ENCODE measurements at regions of chr18 and their contacts with region 1.

Region 1: DNA sequence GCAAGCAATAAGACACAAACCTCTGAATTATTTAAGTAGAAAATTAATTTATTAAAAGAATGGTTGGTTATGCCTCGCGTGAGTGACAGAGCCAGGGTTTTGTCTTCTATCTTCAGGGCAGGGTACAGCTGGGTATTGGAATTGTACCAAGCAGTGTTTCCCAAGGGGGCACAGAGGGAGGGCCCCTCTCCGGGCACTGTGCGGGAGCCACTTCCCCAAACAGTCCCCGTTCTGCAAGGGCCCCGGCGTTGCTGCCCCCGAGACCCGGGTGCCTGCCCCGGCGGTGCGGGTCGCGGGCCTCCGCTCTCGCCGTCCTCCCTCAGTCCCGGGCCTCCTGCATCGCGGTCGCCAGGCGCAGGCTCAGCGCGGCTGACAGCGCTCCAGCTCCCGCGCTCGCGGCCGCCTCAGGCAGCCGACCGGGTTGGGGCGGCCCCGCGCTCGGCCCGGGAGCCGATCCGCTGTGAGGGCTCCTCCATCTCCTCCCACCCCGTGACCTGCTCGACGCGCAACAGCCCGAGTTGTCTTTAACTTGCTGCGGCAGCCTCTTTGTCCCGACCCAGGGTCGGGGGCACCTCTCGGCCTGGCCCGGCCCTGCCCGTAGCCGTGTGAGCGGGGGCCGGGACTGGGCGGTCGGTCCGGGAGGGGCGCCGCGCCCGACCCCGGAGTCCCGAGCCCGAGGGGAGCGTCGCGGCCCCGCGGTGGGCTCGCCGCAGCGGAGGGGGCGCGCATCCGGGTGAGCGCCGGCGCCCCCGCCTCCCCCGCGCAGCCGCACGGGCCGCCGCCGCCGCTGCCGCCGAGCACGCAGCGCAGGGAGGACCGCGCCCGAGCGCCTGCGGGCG is 620 bp upstream of the GALNT1 start:
- DNase-seq: peak; percentile 55 to 84 (median 65)
- ATAC-seq: peak; percentile 60 to 87 (median 84)
- H3K4me3 ChIP-seq: peak overlapping the region; percentile 65 to 96 (median 79)
- H3K27ac ChIP-seq: peak overlapping the region; percentile 90 to 99 (median 96)
- H3K4me1 ChIP-seq: peaks cover 0 to 32% (median 21%) of the 10 kb centered on the region in 12 donors
- H3K27me3 ChIP-seq: no peaks in the 10 kb centered on the region
- CTCF ChIP-seq: no peak
- POLR2A ChIP-seq: peak in 1 of 2 donors; percentile 16

Region 2: GRCh38 chr18:35386600-35387351 is 194.1 kb before region 1 on chr18:
- intact Hi-C with region 1: loop called in 1 of 10 experiments (anchors 10 kb)
- DNase-seq: peak; percentile 57 to 69 (median 61)
- ATAC-seq: peak in 3 of 4 donors; percentile 66 to 81 (median 69)
- H3K4me3 ChIP-seq: no peak overlapping the region
- H3K27ac ChIP-seq: peak overlapping the region in 1 of 12 donors; percentile 16
- H3K4me1 ChIP-seq: peaks cover 0 to 5% (median 0%) of the 10 kb centered on the region in 12 donors
- H3K27me3 ChIP-seq: peaks cover 0 to 3% (median 0%) of the 10 kb centered on the region in 9 donors
- CTCF ChIP-seq: peak; percentile 86 to 99 (median 92)
- POLR2A ChIP-seq: no peak

Region 3: DNA sequence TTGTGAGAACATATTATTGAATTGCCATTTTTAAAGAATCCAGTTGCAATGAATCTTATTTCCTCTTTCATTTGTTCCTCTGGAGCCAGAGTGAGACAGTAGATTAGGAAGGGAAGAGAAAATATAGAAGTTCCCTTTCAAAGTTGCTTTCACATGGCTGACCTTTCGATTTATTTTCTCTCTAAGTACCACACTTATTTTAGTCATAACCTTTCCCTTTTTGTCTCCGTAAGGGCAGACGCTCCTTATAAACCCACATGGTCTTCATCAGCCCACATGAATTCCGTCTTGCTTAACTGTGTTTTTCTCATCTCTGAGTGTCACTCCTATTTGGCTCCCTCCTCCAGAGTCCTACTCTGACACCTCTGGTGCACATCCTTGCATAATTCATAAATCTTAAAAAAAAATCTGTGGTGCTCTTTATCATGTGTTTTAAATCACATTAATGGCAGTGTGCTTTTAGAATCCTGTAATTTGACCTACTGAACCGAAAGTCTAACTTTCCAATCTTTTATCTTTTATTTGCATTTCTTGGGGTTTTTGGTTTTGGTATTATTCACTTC is 165.3 kb before region 1 on chr18:
- intact Hi-C with region 1: loop called in 5 of 10 experiments (anchors 10 kb)
- DNase-seq: no peak
- ATAC-seq: peak in 1 of 4 donors; percentile 17
- H3K4me3 ChIP-seq: peak overlapping the region in 1 of 12 donors; percentile 33
- H3K27ac ChIP-seq: peak overlapping the region in 2 of 12 donors; percentile 10 to 60
- H3K4me1 ChIP-seq: peaks cover 0 to 24% (median 0%) of the 10 kb centered on the region in 12 donors
- H3K27me3 ChIP-seq: no peaks in the 10 kb centered on the region
- CTCF ChIP-seq: no peak
- POLR2A ChIP-seq: no peak

Region 4: GRCh38 chr18:35497370-35498197 is 83.3 kb before region 1 on chr18 and contains the start of gene INO80C:
- intact Hi-C with region 1: loop called in 6 of 10 experiments (anchors 2 to 10 kb)
- DNase-seq: peak; percentile 92 to 96 (median 93)
- ATAC-seq: peak; percentile 98 to 99 (median 98)
- H3K4me3 ChIP-seq: peak within 1 kb of the TSS; percentile 38 to 81 (median 67)
- H3K27ac ChIP-seq: peak within 1 kb of the TSS; percentile 93 to 99 (median 94)
- H3K4me1 ChIP-seq: peaks cover 0 to 30% (median 14%) of the 10 kb centered on the region in 12 donors
- H3K27me3 ChIP-seq: no peaks in the 10 kb centered on the region
- CTCF ChIP-seq: no peak
- POLR2A ChIP-seq: peak; percentile 29 to 85
- total RNA-seq, gene INO80C: 5.6 to 29.0 (median 22.3) TPM

Region 5: DNA sequence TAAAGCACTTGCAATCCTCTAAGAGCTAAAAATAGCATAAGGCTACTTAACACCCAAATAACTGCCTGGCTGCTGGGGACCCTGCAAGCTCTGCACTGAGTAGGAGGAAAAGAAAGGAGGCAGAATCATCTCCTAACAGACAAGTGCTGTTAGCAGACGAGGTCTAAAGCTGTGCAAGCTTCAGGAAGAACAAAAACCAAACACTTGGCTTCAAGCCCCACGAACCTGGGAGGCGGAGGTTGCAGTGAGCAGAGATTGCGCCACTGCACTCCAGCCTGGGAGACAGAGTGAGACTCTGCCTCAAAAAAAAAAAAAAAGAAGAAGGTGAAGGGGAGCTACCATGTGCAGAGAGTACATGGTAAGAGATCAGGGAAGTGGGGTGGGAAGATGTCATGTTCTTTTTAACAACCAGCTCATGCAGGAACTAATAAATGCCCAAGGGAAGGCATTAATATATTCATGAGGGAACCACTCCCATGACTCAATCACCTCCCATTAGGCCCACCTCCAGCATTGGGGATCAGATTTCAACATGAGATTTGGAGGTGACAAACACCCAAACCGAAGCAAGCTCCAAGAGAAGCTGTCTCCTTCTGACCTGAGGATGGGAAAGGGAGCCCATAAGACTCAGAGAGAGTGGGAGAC is 54.3 kb before region 1 on chr18:
- intact Hi-C with region 1: loop called in 1 of 10 experiments (anchors 5 kb)
- DNase-seq: no peak
- ATAC-seq: peak; percentile 19 to 49 (median 42)
- H3K4me3 ChIP-seq: peak overlapping the region in 7 of 12 donors; percentile 7 to 27 (median 14)
- H3K27ac ChIP-seq: peak overlapping the region in 7 of 12 donors; percentile 15 to 57 (median 32)
- H3K4me1 ChIP-seq: peaks cover 0 to 50% (median 19%) of the 10 kb centered on the region in 12 donors
- H3K27me3 ChIP-seq: no peaks in the 10 kb centered on the region
- CTCF ChIP-seq: no peak
- POLR2A ChIP-seq: no peak

Region 6: DNA sequence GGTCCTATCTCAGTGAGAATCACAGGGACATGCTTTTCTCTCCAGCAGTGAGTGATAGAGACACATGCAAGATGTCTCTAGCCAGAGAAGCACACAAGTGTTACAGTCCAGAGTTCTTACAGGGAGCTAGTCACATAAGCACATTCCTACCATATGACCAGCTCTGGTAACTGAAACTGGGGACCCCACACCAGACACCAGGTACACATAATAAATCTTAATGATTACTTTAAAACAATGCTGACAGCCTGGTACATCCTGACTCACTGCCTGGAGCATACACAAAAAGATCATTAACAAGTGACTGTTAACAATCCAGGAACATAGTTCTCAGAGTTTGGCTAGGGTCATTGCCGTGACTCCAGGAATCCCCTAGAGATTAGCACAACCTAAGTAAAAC is 54.2 kb after region 1 on chr18:
- intact Hi-C with region 1: loop called in 1 of 10 experiments (anchors 10 kb)
- DNase-seq: no peak
- ATAC-seq: peak in 2 of 4 donors; percentile 20 to 31
- H3K4me3 ChIP-seq: no peak overlapping the region
- H3K27ac ChIP-seq: peak overlapping the region in 1 of 12 donors; percentile 5
- H3K4me1 ChIP-seq: peaks cover 0 to 17% (median 0%) of the 10 kb centered on the region in 12 donors
- H3K27me3 ChIP-seq: no peaks in the 10 kb centered on the region
- CTCF ChIP-seq: no peak
- POLR2A ChIP-seq: no peak